Caco-2 (cell line): ENCODE measurements at regions of chr17 and their contacts with region 1.

Region 1: DNA sequence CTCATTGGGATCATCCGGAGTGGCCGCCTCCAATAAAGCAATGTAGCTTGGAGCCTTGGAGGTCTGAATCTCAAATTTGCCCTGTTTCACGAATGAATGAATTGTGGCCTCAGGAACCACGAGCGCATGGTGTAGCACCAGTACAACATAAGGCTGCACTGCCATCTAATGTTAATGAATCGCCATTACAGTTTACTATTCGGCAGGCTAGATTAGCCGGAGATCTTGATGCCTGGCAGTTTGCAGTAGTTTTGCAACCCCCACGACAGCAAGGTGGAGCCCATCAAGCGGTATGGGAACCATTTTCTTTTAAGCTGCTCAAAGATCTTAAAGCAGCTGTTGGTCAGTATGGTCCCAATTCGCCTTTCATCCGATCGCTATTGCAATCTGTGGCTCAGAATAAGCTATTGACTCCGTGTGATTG is 18.8 kb downstream of the ALOX15B start:
- DNase-seq: peak; percentile 47 to 60
- H3K4me3 ChIP-seq: peak overlapping the region; percentile 46
- H3K4me3 Mint-ChIP-seq: peak overlapping the region; percentile 83
- H3K27ac Mint-ChIP-seq: peak overlapping the region; percentile 90
- H3K4me1 ChIP-seq: peaks cover 14% of the 10 kb centered on the region
- H3K4me1 Mint-ChIP-seq: peaks cover 13% of the 10 kb centered on the region
- H3K27me3 ChIP-seq: no peaks in the 10 kb centered on the region
- H3K27me3 Mint-ChIP-seq: no peaks in the 10 kb centered on the region
- CTCF ChIP-seq: peak; percentile 28 to 51

Region 2: GRCh38 chr17:7862692-7863437 is 194.8 kb before region 1 on chr17:
- CTCF ChIA-PET with region 1: no interaction called
- POLR2A ChIA-PET with region 1: no interaction called
- intact Hi-C with region 1: loop called (anchors 2 kb)
- DNase-seq: peak in 1 of 2 experiments; percentile 57
- H3K4me3 ChIP-seq: no peak overlapping the region
- H3K4me3 Mint-ChIP-seq: peak overlapping the region; percentile 54
- H3K27ac Mint-ChIP-seq: peak overlapping the region; percentile 10
- H3K4me1 ChIP-seq: peaks cover 9% of the 10 kb centered on the region; the same call in 1 of the 2 replicates
- H3K4me1 Mint-ChIP-seq: peaks cover 15% of the 10 kb centered on the region
- H3K27me3 ChIP-seq: no peaks in the 10 kb centered on the region
- H3K27me3 Mint-ChIP-seq: no peaks in the 10 kb centered on the region
- CTCF ChIP-seq: peak; percentile 46 to 67

Region 3: GRCh38 chr17:7989781-7990655 is 67.7 kb before region 1 on chr17:
- CTCF ChIA-PET with region 1: interaction called, 6 read pairs
- POLR2A ChIA-PET with region 1: no interaction called
- intact Hi-C with region 1: loop called (anchors 2 kb)
- DNase-seq: peak; percentile 66 to 88
- H3K4me3 ChIP-seq: peak overlapping the region; percentile 57
- H3K4me3 Mint-ChIP-seq: peak overlapping the region; percentile 61
- H3K27ac Mint-ChIP-seq: no peak overlapping the region
- H3K4me1 ChIP-seq: no peaks in the 10 kb centered on the region
- H3K4me1 Mint-ChIP-seq: no peaks in the 10 kb centered on the region
- H3K27me3 ChIP-seq: no peaks in the 10 kb centered on the region
- H3K27me3 Mint-ChIP-seq: no peaks in the 10 kb centered on the region
- CTCF ChIP-seq: peak; percentile 75 to 80

Region 4: GRCh38 chr17:8022360-8023003 is 35.2 kb before region 1 on chr17:
- CTCF ChIA-PET with region 1: interaction called, 25 read pairs
- POLR2A ChIA-PET with region 1: no interaction called
- intact Hi-C with region 1: loop called (anchors 1 kb)
- DNase-seq: no peak
- H3K4me3 ChIP-seq: no peak overlapping the region
- H3K4me3 Mint-ChIP-seq: peak overlapping the region; percentile 42
- H3K27ac Mint-ChIP-seq: no peak overlapping the region
- H3K4me1 ChIP-seq: peaks cover 7% of the 10 kb centered on the region; the same call in 1 of the 2 replicates
- H3K4me1 Mint-ChIP-seq: peaks cover 7% of the 10 kb centered on the region
- H3K27me3 ChIP-seq: no peaks in the 10 kb centered on the region
- H3K27me3 Mint-ChIP-seq: no peaks in the 10 kb centered on the region
- CTCF ChIP-seq: no peak

Region 5: GRCh38 chr17:8118769-8119580 is 61.3 kb after region 1 on chr17:
- CTCF ChIA-PET with region 1: interaction called, 12 read pairs
- POLR2A ChIA-PET with region 1: interaction called, 8 read pairs
- intact Hi-C with region 1: loop called (anchors 2 kb)
- DNase-seq: peak; percentile 83 to 84
- H3K4me3 ChIP-seq: peak overlapping the region; percentile 63
- H3K4me3 Mint-ChIP-seq: peak overlapping the region; percentile 87
- H3K27ac Mint-ChIP-seq: peak overlapping the region; percentile 92
- H3K4me1 ChIP-seq: no peaks in the 10 kb centered on the region; the same call in 1 of the 2 replicates
- H3K4me1 Mint-ChIP-seq: peaks cover 17% of the 10 kb centered on the region
- H3K27me3 ChIP-seq: no peaks in the 10 kb centered on the region; the same call in 1 of the 2 replicates
- H3K27me3 Mint-ChIP-seq: peaks cover 6% of the 10 kb centered on the region
- CTCF ChIP-seq: peak; percentile 57 to 68